K562 (cell line): ENCODE measurements at regions of chr19 and their contacts with region 1.

Region 1: GRCh38 chr19:55301459-55302317 is 17.9 kb downstream of the BRSK1 start:
- DNase-seq: peak; percentile 94 to 99 (median 99)
- ATAC-seq: peak; percentile 83
- H3K4me3 ChIP-seq: peak overlapping the region; percentile 41
- H3K27ac ChIP-seq: peak overlapping the region; percentile 50
- H3K4me1 ChIP-seq: peaks cover 17 to 57% of the 10 kb centered on the region in 2 experiments; a peak in 4 of 5 replicates
- H3K27me3 ChIP-seq: no peaks in the 10 kb centered on the region
- CTCF ChIP-seq: peak; percentile 86 to 93 (median 90)
- EP300 ChIP-seq: no peak
- POLR2A ChIP-seq: peak; percentile 61
- RAD21 ChIP-seq: peak; percentile 43 to 67

Region 2: DNA sequence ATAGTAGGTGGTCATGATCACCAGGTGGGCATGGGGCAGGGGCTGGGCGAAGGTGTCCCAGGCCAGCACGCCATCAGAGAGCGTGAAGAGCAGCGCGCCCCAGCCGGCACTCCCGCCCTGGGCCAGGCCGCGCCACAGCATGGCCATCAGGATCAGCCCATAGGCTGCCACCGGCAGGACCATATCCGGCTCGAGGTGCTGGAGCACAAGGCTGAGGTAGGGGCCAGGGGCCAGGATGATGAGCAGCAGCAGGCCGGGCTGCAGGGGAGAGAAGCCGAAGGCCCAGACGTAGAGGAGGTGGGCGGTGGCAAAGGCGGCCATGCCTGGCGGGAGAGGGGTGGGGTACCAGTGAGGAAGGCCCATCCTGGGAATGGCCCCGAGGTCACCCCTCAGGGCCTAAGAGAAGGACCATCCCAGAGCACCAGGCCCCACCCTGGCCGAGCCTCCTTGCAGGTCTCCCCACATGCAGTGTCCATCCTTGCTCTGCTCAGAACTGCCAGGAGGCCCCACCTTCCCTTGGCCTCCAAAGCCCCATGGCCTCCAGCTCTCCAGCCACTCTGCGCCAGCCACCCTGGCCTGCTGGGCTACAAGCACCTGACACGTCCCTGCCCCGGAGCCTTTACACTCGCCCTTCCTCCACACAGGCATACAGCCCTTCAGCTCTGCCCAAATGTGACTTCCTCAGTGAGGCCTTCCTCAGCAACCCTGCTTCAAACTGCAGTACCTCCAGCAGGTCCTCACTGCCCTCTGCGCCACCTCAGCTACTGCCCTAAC is 74.3 kb before region 1 on chr19:
- CTCF ChIA-PET with region 1: no interaction called
- POLR2A ChIA-PET with region 1: no interaction called
- in situ Hi-C with region 1: no loop called
- intact Hi-C with region 1: no loop called
- DNase-seq: peak in 1 of 4 experiments; percentile 10
- ATAC-seq: peak; percentile 5; the same call in 2 of the 3 replicates
- H3K4me3 ChIP-seq: no peak overlapping the region
- H3K27ac ChIP-seq: no peak overlapping the region
- H3K4me1 ChIP-seq: peaks cover 0 to 52% of the 10 kb centered on the region in 2 experiments; a peak in 2 of 5 replicates
- H3K27me3 ChIP-seq: no peaks in the 10 kb centered on the region
- CTCF ChIP-seq: no peak
- EP300 ChIP-seq: no peak
- POLR2A ChIP-seq: no peak; the same call in 1 of the 2 replicates
- RAD21 ChIP-seq: no peak

Region 3: DNA sequence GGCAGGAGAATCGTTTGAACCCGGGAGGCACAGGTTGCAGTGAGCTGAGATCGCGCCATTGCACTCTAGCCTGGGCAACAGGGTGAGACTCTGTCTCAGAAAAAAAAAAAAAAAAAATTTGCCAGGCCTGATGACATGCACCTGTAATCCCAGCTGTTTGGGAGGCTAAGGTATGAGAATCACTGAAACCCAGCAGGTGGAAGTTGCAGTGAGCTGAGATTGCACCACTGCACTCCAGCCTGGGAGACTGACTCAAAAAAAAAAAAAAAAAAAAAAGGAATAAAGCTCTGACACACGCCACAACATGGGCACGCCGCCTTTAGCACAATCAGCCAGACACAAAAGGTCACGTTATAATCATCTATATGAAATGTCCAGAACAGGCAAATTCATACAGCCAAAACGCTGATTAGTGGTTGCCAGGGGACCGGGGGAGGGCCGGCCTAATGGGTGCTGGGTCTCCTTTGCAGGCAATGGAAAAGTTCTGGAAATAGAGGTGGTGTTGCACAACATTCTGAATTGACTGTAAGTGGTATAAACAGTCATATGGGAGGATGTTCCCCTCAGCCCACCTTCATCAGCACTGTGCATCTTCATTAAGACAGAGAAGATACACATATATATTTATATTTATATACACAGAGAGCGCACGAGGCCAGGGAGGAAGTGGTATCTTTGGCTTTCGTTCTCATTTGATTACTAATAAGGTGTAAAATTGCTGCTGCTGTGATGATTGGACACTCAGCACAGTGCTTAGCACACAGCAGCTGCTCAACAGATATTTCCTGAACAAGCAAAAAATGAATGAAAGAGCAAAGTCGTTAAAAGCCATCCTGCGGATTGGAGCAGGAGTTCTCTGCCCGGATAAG is 25.6 kb before region 1 on chr19:
- CTCF ChIA-PET with region 1: no interaction called
- POLR2A ChIA-PET with region 1: no interaction called
- in situ Hi-C with region 1: no loop called
- intact Hi-C with region 1: no loop called
- DNase-seq: no peak
- ATAC-seq: no peak
- H3K4me3 ChIP-seq: no peak overlapping the region
- H3K27ac ChIP-seq: no peak overlapping the region
- H3K4me1 ChIP-seq: peaks cover 12 to 19% of the 10 kb centered on the region in 2 experiments
- H3K27me3 ChIP-seq: no peaks in the 10 kb centered on the region
- CTCF ChIP-seq: no peak
- EP300 ChIP-seq: no peak
- POLR2A ChIP-seq: no peak
- RAD21 ChIP-seq: no peak

Region 4: GRCh38 chr19:55289117-55289796 is 12.4 kb before region 1 on chr19:
- CTCF ChIA-PET with region 1: no interaction called
- POLR2A ChIA-PET with region 1: interaction called, 12 read pairs
- in situ Hi-C with region 1: no loop called
- intact Hi-C with region 1: no loop called
- DNase-seq: no peak
- ATAC-seq: no peak
- H3K4me3 ChIP-seq: no peak overlapping the region
- H3K27ac ChIP-seq: 0 out of 3 replicates have a peak overlapping the region, but pooled peaks have one; percentile 33
- H3K4me1 ChIP-seq: peaks cover 4 to 37% of the 10 kb centered on the region in 2 experiments; a peak in 4 of 5 replicates
- H3K27me3 ChIP-seq: no peaks in the 10 kb centered on the region
- CTCF ChIP-seq: no peak
- EP300 ChIP-seq: no peak
- POLR2A ChIP-seq: no peak
- RAD21 ChIP-seq: no peak